GM12878 (cell line): ENCODE measurements at regions of chr3 and their contacts with region 1.

Region 1: DNA sequence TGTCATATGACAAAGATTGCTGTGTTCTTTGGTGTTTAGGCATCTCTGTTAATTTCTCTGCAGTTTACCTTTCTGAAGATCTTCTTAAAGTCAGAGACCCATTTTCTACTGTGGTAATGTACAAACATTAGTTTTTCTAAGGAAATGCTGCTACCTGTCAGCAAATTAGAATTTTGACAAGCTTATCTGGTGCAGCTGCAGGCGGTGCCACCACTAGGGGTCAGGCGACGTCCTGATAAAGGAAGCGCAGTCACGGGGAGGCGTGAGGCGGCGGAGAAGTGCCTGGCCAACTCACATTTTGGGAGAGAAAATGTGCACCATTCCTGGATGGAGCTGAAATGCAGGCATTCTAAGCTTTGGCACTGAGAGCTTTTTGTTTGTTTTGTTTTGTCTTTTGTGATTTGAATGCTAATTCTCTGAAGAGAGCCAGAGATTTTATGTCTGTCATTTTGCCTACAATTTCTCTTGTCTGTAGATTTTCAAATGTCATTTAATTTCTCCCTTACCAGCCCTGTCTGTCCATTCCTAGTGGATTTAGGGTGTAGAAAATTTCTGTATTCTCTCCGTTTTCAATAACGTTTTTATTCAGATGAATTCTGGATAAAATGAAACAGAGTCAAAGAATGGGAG is 24.9 kb upstream of the SIAH2 start:
- DNase-seq: no peak
- ATAC-seq: peak; percentile 94
- H3K4me3 ChIP-seq: no peak overlapping the region
- H3K27ac ChIP-seq: no peak overlapping the region
- H3K4me1 ChIP-seq: peaks cover 2% of the 10 kb centered on the region; the same call in 1 of the 2 replicates
- H3K27me3 ChIP-seq: no peaks in the 10 kb centered on the region; a peak in 1 of 4 replicates
- CTCF ChIP-seq: peak; percentile 94 to 98 (median 97); a peak in 5 of 6 replicates
- EP300 ChIP-seq: no peak
- POLR2A ChIP-seq: no peak
- RAD21 ChIP-seq: peak; percentile 81

Region 2: GRCh38 chr3:150528354-150528797 is 259.5 kb before region 1 on chr3:
- CTCF ChIA-PET with region 1: interaction called, 14 read pairs
- POLR2A ChIA-PET with region 1: no interaction called
- RAD21 ChIA-PET with region 1: interaction called, 5 read pairs
- SMC1A ChIA-PET with region 1: interaction called, 6 read pairs
- in situ Hi-C with region 1: no loop called
- intact Hi-C with region 1: no loop called
- DNase-seq: no peak
- ATAC-seq: peak; percentile 54
- H3K4me3 ChIP-seq: no peak overlapping the region
- H3K27ac ChIP-seq: no peak overlapping the region
- H3K4me1 ChIP-seq: no peaks in the 10 kb centered on the region
- H3K27me3 ChIP-seq: no peaks in the 10 kb centered on the region
- CTCF ChIP-seq: peak; percentile 13 to 48 (median 33); a peak in 4 of 6 replicates
- EP300 ChIP-seq: no peak
- POLR2A ChIP-seq: no peak
- RAD21 ChIP-seq: peak; percentile 48

Region 3: GRCh38 chr3:150775091-150775501 is 12.8 kb before region 1 on chr3:
- CTCF ChIA-PET with region 1: interaction called, 23 read pairs
- POLR2A ChIA-PET with region 1: interaction called, 4 read pairs
- RAD21 ChIA-PET with region 1: interaction called, 5 read pairs
- SMC1A ChIA-PET with region 1: interaction called, 5 read pairs
- in situ Hi-C with region 1: no loop called
- intact Hi-C with region 1: no loop called
- DNase-seq: no peak
- ATAC-seq: no peak
- H3K4me3 ChIP-seq: no peak overlapping the region
- H3K27ac ChIP-seq: no peak overlapping the region
- H3K4me1 ChIP-seq: no peaks in the 10 kb centered on the region
- H3K27me3 ChIP-seq: no peaks in the 10 kb centered on the region
- CTCF ChIP-seq: no peak
- EP300 ChIP-seq: no peak
- POLR2A ChIP-seq: no peak
- RAD21 ChIP-seq: no peak

Region 4: DNA sequence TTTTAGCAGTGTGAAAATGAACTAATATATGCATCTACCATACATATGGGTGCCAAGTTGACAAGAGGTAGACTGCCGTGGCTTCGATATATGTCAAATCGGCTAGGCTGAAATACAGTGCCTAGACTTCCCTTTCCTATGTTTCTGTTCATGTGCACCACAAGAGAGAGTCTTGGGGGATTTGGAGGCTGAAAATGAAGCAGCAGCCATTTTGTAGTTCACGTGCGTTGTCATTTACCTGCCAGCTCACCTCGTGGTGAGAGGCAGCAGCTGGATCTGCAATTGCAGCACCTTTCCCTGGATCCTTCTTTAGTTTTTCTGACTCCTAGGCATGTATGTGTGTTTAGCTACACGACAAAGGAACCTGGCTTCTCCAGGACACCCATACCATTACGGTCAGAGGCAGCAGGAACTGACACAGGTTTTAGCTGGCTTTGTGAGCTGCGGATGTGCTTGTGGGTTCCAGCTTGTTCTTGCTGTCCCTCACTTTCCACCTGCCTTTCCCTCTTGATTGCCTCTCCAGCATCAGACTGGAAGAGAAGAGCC is 15.7 kb after region 1 on chr3:
- CTCF ChIA-PET with region 1: interaction called, 11 read pairs
- POLR2A ChIA-PET with region 1: no interaction called
- RAD21 ChIA-PET with region 1: no interaction called
- SMC1A ChIA-PET with region 1: interaction called, 5 read pairs
- in situ Hi-C with region 1: no loop called
- intact Hi-C with region 1: no loop called
- DNase-seq: no peak
- ATAC-seq: no peak
- H3K4me3 ChIP-seq: no peak overlapping the region
- H3K27ac ChIP-seq: no peak overlapping the region
- H3K4me1 ChIP-seq: no peaks in the 10 kb centered on the region
- H3K27me3 ChIP-seq: peaks cover 0 to 3% of the 10 kb centered on the region in 2 experiments; a peak in 3 of 4 replicates
- CTCF ChIP-seq: no peak
- EP300 ChIP-seq: no peak
- POLR2A ChIP-seq: no peak
- RAD21 ChIP-seq: no peak

Region 5: DNA sequence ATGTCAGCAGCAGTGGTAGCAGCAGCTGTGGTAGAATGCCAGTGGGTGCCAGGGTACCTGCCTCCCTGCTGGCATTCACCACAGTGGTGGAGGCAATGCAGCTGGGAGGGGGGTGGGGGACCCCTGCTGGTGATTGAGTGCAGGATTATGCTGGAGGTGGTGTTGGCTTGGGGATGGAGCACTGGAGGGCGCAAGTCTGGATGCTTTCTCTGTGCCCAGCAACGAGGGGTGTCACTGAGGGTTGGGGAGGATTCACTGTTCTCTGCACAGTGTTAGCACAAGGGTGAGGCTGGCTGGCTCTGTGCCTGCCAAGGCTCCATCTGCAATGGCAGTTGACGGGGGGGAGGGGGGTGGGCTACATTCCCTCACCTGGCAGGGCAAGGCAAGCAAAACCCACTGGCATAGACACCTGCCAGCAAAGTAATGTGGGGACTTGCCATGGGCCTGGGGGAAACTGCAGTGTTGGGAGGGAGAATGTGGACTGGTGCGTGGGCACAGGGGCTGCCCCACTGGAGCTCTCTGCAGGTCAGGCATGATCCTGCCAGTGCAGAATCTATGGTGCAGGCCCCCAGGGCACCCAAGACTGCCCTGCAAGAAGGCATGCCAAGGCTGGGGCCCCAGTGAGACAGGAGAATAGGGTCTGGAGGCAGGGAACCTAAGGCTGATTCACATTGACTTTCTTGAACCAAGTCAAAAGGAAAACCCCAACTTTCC is 53.1 kb after region 1 on chr3:
- CTCF ChIA-PET with region 1: interaction called, 15 read pairs
- POLR2A ChIA-PET with region 1: no interaction called
- RAD21 ChIA-PET with region 1: interaction called, 3 read pairs
- SMC1A ChIA-PET with region 1: interaction called, 4 read pairs
- in situ Hi-C with region 1: no loop called
- intact Hi-C with region 1: no loop called
- DNase-seq: no peak
- ATAC-seq: no peak
- H3K4me3 ChIP-seq: no peak overlapping the region
- H3K27ac ChIP-seq: no peak overlapping the region
- H3K4me1 ChIP-seq: no peaks in the 10 kb centered on the region
- H3K27me3 ChIP-seq: peaks cover 0 to 3% of the 10 kb centered on the region in 2 experiments; a peak in 1 of 4 replicates
- CTCF ChIP-seq: peak in 2 of 3 experiments; percentile 12 to 17; a peak in 1 of 6 replicates
- EP300 ChIP-seq: no peak
- POLR2A ChIP-seq: no peak
- RAD21 ChIP-seq: no peak

Region 6: DNA sequence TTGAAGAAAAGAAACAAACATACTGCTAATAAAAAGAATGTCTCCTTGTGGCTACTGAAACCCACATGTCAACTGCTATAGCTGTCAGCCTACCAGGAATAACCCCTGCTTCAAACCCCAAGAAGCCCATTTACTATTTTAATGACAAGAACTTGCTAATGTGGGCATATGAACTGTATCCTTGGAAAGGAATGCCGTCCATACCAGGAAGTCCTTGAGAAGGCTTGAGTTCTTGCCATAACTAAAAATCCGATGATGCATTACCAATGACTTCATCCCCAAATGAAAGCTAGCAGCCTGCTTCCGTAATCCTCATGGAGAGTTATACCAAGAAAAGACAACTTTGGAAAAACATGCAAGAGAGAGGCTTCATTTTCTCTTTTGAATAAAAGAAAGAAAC is 82.5 kb after region 1 on chr3:
- CTCF ChIA-PET with region 1: interaction called, 34 read pairs
- POLR2A ChIA-PET with region 1: no interaction called
- RAD21 ChIA-PET with region 1: no interaction called
- SMC1A ChIA-PET with region 1: interaction called, 3 read pairs
- in situ Hi-C with region 1: no loop called
- intact Hi-C with region 1: loop called (anchors 1 kb)
- DNase-seq: no peak
- ATAC-seq: no peak
- H3K4me3 ChIP-seq: no peak overlapping the region
- H3K27ac ChIP-seq: no peak overlapping the region
- H3K4me1 ChIP-seq: no peaks in the 10 kb centered on the region
- H3K27me3 ChIP-seq: no peaks in the 10 kb centered on the region
- CTCF ChIP-seq: no peak
- EP300 ChIP-seq: no peak
- POLR2A ChIP-seq: no peak
- RAD21 ChIP-seq: no peak

Region 7: DNA sequence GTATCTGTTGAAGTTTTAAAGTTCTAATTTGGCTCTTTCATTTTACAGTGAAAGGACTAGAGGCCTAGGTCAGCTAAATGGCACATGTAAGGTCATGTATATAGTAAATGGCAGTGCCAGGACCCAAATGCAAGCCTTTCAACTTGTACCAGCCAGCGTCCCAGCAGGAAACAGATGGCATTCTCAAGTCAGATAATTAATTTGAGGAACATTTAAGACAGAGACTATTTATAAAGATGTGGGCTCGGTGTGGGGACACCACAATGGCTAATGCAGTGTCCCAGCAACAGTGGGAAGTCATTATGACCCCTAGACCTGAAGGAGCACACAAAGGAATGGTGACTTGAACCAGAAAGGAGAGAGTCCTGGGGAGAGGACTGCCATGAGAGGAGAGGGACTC is 111.3 kb after region 1 on chr3:
- CTCF ChIA-PET with region 1: no interaction called
- POLR2A ChIA-PET with region 1: no interaction called
- RAD21 ChIA-PET with region 1: no interaction called
- SMC1A ChIA-PET with region 1: no interaction called
- in situ Hi-C with region 1: no loop called
- intact Hi-C with region 1: no loop called
- DNase-seq: no peak
- ATAC-seq: no peak
- H3K4me3 ChIP-seq: no peak overlapping the region
- H3K27ac ChIP-seq: no peak overlapping the region
- H3K4me1 ChIP-seq: no peaks in the 10 kb centered on the region
- H3K27me3 ChIP-seq: no peaks in the 10 kb centered on the region; a peak in 2 of 4 replicates
- CTCF ChIP-seq: no peak
- EP300 ChIP-seq: no peak
- POLR2A ChIP-seq: no peak
- RAD21 ChIP-seq: no peak

Region 8: GRCh38 chr3:151146071-151146730 is 358.3 kb after region 1 on chr3:
- CTCF ChIA-PET with region 1: interaction called, 11 read pairs
- POLR2A ChIA-PET with region 1: no interaction called
- RAD21 ChIA-PET with region 1: interaction called, 3 read pairs
- SMC1A ChIA-PET with region 1: no interaction called
- in situ Hi-C with region 1: loop called (anchors 5 kb)
- intact Hi-C with region 1: loop called (anchors 5 kb)
- DNase-seq: peak; percentile 25
- ATAC-seq: peak; percentile 94
- H3K4me3 ChIP-seq: no peak overlapping the region
- H3K27ac ChIP-seq: no peak overlapping the region
- H3K4me1 ChIP-seq: no peaks in the 10 kb centered on the region
- H3K27me3 ChIP-seq: peaks cover 2 to 3% of the 10 kb centered on the region in 2 experiments
- CTCF ChIP-seq: peak; percentile 83 to 90 (median 83)
- EP300 ChIP-seq: no peak
- POLR2A ChIP-seq: no peak
- RAD21 ChIP-seq: peak; percentile 74